CD8-positive, alpha-beta T cell (primary cell): ENCODE measurements at regions of chr19 and their contacts with region 1.

Region 1: GRCh38 chr19:39397360-39398296 is 6.5 kb downstream of the MED29 start:
- DNase-seq: peak; percentile 88 to 98 (median 94)
- ATAC-seq: peak; percentile 41
- H3K4me3 ChIP-seq: peak overlapping the region; percentile 12 to 18
- H3K4me3 Mint-ChIP-seq: peak overlapping the region; percentile 71
- H3K27ac ChIP-seq: peak overlapping the region; percentile 33 to 92
- H3K27ac Mint-ChIP-seq: peak overlapping the region; percentile 96
- H3K4me1 ChIP-seq: peaks cover 51% of the 10 kb centered on the region
- H3K4me1 Mint-ChIP-seq: peaks cover 56% of the 10 kb centered on the region
- H3K27me3 ChIP-seq: no peaks in the 10 kb centered on the region
- H3K27me3 Mint-ChIP-seq: no peaks in the 10 kb centered on the region
- CTCF ChIP-seq: peak; percentile 94

Region 2: GRCh38 chr19:39212375-39212742 is 185.3 kb before region 1 on chr19:
- CTCF ChIA-PET with region 1: no interaction called
- POLR2A ChIA-PET with region 1: no interaction called
- intact Hi-C with region 1: loop called in 1 of 2 experiments (anchors 2 kb)
- DNase-seq: peak; percentile 28 to 78 (median 63)
- ATAC-seq: peak; percentile 73
- H3K4me3 ChIP-seq: no peak overlapping the region
- H3K4me3 Mint-ChIP-seq: no peak overlapping the region
- H3K27ac ChIP-seq: no peak overlapping the region
- H3K27ac Mint-ChIP-seq: no peak overlapping the region
- H3K4me1 ChIP-seq: no peaks in the 10 kb centered on the region
- H3K4me1 Mint-ChIP-seq: no peaks in the 10 kb centered on the region
- H3K27me3 ChIP-seq: no peaks in the 10 kb centered on the region
- H3K27me3 Mint-ChIP-seq: peaks cover 10% of the 10 kb centered on the region
- CTCF ChIP-seq: peak; percentile 47

Region 3: GRCh38 chr19:39335168-39335548 is 62.5 kb before region 1 on chr19:
- CTCF ChIA-PET with region 1: interaction called, 10 read pairs
- POLR2A ChIA-PET with region 1: interaction called, 3 read pairs
- intact Hi-C with region 1: no loop called
- DNase-seq: peak in 6 of 9 experiments; percentile 10 to 63 (median 38)
- ATAC-seq: peak; percentile 39
- H3K4me3 ChIP-seq: peak overlapping the region; percentile 68 to 96
- H3K4me3 Mint-ChIP-seq: peak overlapping the region; percentile 97
- H3K27ac ChIP-seq: peak overlapping the region; percentile 83 to 96
- H3K27ac Mint-ChIP-seq: peak overlapping the region; percentile 99
- H3K4me1 ChIP-seq: peaks cover 52% of the 10 kb centered on the region
- H3K4me1 Mint-ChIP-seq: peaks cover 60% of the 10 kb centered on the region
- H3K27me3 ChIP-seq: no peaks in the 10 kb centered on the region
- H3K27me3 Mint-ChIP-seq: no peaks in the 10 kb centered on the region
- CTCF ChIP-seq: no peak

Region 4: DNA sequence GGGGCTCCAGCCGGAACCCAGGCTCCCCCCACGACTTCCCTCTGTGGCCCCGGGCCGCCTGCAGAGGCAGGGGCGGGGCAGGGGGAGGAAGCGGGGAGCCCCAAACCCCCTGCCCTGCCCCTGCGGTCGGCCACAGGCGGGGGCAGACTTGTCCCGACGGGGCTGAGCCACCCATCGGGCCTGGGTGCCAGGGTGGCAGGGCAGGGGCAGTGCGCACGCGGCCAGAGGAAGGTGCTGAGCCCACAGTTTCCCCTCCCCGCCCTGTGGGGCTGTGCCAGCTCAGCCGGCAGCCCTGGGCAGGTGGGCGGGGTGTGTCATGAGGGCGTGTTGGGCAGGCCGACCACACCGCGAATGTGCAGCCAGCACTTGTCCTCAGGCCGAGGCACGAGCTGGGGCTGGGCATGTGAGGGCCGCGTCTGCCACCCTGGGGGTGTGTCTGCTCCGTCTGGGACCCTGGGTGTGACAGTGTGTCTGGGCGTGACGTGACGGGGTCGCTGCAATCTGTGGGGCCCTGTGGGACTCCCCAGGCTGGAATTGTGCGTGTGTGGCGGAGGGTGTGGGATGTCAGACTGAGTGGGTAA is 1930.0 kb after region 1 on chr19:
- CTCF ChIA-PET with region 1: no interaction called
- POLR2A ChIA-PET with region 1: no interaction called
- intact Hi-C with region 1: loop called in 1 of 2 experiments (anchors 5 kb)
- DNase-seq: peak in 8 of 9 experiments; percentile 68 to 98 (median 82)
- ATAC-seq: no peak
- H3K4me3 ChIP-seq: peak overlapping the region; percentile 21 to 23
- H3K4me3 Mint-ChIP-seq: peak overlapping the region; percentile 74
- H3K27ac ChIP-seq: peak overlapping the region; percentile 50 to 78
- H3K27ac Mint-ChIP-seq: peak overlapping the region; percentile 98
- H3K4me1 ChIP-seq: peaks cover 63% of the 10 kb centered on the region
- H3K4me1 Mint-ChIP-seq: peaks cover 69% of the 10 kb centered on the region
- H3K27me3 ChIP-seq: no peaks in the 10 kb centered on the region
- H3K27me3 Mint-ChIP-seq: no peaks in the 10 kb centered on the region
- CTCF ChIP-seq: no peak